Aorta (tissue), 5 donors: ENCODE measurements at regions of chr1 and their contacts with region 1.

Region 1: DNA sequence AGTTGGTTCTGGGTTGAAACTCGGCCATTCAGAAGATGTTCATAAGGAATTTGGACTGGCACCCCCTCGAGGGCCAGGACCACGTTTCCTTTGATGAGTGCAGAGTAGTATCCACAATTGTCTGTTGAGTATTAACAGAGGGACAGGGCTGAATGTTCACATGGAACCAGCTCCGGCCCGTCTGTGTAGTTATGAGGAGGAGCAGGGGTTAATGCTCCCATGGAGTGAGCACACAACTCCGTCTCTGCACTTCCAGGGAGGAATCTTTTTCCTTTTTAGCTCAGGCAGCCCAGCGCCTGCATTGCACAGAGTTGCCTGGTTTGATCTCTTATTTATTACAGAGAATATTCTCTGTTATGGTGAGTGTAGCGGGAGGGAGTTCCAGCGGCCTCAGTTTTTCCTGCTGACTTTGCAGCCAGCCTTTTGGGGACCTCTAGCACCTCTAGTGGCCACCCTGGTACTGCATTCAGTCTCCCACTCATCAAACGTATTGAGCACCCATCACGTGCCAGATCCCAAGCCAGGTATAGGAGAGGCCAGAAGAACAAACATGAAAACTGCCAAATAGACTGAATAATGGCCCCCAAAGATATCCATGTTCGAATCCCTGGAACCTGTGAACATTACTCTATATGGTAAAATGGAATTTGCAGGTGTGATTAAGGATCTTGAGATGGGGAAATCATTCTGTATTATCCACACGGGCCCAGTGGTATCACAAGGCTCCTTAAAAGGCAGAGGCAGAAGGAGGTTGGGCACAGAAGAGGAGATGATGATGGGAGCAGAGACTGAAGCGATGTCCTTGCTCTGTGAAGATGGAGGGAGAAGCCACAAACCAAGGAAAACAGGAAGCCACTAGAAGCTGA is 167.7 kb upstream of the CSF3R start:
- DNase-seq: peak; percentile 66 to 85
- ATAC-seq: peak; percentile 53
- H3K4me3 ChIP-seq: no peak overlapping the region
- H3K27ac ChIP-seq: no peak overlapping the region
- H3K4me1 ChIP-seq: no peaks in the 10 kb centered on the region
- H3K27me3 ChIP-seq: no peaks in the 10 kb centered on the region

Region 2: DNA sequence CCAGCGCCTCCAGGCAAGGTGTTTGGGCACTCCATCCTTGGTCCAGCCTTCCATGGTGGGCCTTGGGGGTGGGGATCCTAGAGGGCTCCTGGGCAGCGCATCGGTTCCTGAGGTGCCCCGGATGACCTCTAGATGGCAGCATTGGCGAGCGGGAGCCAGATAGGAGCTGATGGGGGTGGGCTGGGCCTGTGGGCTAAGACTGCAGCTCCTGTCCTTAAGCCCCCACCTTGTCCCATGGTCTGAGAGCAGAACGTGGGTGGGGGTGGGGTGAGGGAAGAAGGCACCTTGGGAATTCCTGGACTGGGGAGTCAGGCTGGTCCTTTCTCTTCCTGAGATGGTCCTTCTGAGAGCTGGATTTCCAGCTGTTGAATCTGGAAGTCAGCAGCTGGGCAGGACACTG is 74.3 kb before region 1 on chr1:
- intact Hi-C with region 1: loop called in 1 of 2 experiments (anchors 2 kb)
- DNase-seq: peak; percentile 53 to 83
- ATAC-seq: peak; percentile 71
- H3K4me3 ChIP-seq: no peak overlapping the region
- H3K27ac ChIP-seq: no peak overlapping the region
- H3K4me1 ChIP-seq: no peaks in the 10 kb centered on the region
- H3K27me3 ChIP-seq: no peaks in the 10 kb centered on the region

Region 3: GRCh38 chr1:36675106-36675505 is 24.7 kb after region 1 on chr1:
- intact Hi-C with region 1: no loop called
- DNase-seq: peak in 1 of 2 donors; percentile 5
- ATAC-seq: no peak
- H3K4me3 ChIP-seq: no peak overlapping the region
- H3K27ac ChIP-seq: no peak overlapping the region
- H3K4me1 ChIP-seq: no peaks in the 10 kb centered on the region
- H3K27me3 ChIP-seq: no peaks in the 10 kb centered on the region

Region 4: DNA sequence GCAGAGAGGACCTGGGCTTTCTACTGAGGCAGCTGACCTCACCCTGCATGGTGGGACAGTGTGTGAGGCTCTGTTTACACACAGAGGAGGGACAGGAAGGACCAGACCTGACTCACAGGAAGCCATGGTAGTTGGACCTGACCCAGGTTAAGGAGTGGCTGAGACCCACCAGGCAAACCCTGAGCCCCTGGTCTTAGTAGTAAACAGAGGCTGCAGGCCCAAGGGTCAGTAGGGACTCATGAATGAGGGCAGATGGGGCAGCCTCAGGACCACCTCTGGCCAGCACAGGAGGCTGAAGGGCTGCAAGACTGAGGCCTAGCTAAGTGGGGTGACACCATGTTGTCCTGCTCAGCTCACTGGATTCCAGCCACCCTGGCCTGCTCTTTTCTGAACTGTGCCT is 110.7 kb after region 1 on chr1:
- intact Hi-C with region 1: no loop called
- DNase-seq: peak in 1 of 2 donors; percentile 39
- ATAC-seq: no peak
- H3K4me3 ChIP-seq: no peak overlapping the region
- H3K27ac ChIP-seq: no peak overlapping the region
- H3K4me1 ChIP-seq: no peaks in the 10 kb centered on the region
- H3K27me3 ChIP-seq: no peaks in the 10 kb centered on the region

Region 5: DNA sequence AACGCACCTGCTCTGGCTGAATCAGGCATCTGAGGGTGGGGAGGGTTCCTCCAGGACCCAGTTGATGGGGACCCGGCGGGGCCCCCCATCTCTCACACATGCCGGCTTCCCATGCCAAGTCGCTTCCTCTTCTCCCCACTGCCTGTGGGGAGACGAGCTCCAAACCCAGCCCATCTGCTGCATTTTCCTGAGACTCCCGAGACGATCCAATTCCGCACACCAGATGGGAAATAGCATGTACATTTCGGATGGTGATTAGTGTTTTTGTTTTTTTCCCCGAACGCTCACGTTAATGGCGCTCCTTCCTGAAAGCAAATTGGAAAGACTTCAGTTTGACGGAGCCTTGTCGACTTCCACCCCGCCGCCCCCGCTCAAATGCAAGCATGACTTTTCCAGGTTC is 397.1 kb after region 1 on chr1:
- intact Hi-C with region 1: no loop called
- DNase-seq: no peak
- ATAC-seq: no peak
- H3K4me3 ChIP-seq: no peak overlapping the region
- H3K27ac ChIP-seq: no peak overlapping the region
- H3K4me1 ChIP-seq: no peaks in the 10 kb centered on the region
- H3K27me3 ChIP-seq: no peaks in the 10 kb centered on the region